GM12878 (cell line): ENCODE measurements at regions of chr14 and their contacts with region 1.

Region 1: GRCh38 chr14:62179367-62180018 is 417.3 kb downstream of the SNAPC1 start:
- DNase-seq: peak; percentile 9
- ATAC-seq: peak; percentile 83
- H3K4me3 ChIP-seq: no peak overlapping the region
- H3K27ac ChIP-seq: no peak overlapping the region
- H3K4me1 ChIP-seq: no peaks in the 10 kb centered on the region
- H3K27me3 ChIP-seq: no peaks in the 10 kb centered on the region
- CTCF ChIP-seq: peak; percentile 62 to 68 (median 65); a peak in 5 of 6 replicates
- EP300 ChIP-seq: no peak
- POLR2A ChIP-seq: no peak
- RAD21 ChIP-seq: peak; percentile 81

Region 2: GRCh38 chr14:63039800-63040380 is 860.4 kb after region 1 on chr14:
- CTCF ChIA-PET with region 1: interaction called, 5 read pairs
- POLR2A ChIA-PET with region 1: no interaction called
- RAD21 ChIA-PET with region 1: no interaction called
- SMC1A ChIA-PET with region 1: no interaction called
- in situ Hi-C with region 1: no loop called
- intact Hi-C with region 1: loop called (anchors 5 kb)
- DNase-seq: no peak
- ATAC-seq: peak; percentile 50; the same call in 2 of the 3 replicates
- H3K4me3 ChIP-seq: no peak overlapping the region
- H3K27ac ChIP-seq: no peak overlapping the region
- H3K4me1 ChIP-seq: no peaks in the 10 kb centered on the region
- H3K27me3 ChIP-seq: peaks cover 0 to 3% of the 10 kb centered on the region in 2 experiments; a peak in 1 of 4 replicates
- CTCF ChIP-seq: peak; percentile 8 to 30 (median 17); a peak in 2 of 6 replicates
- EP300 ChIP-seq: no peak
- POLR2A ChIP-seq: no peak
- RAD21 ChIP-seq: peak; percentile 43

Region 3: DNA sequence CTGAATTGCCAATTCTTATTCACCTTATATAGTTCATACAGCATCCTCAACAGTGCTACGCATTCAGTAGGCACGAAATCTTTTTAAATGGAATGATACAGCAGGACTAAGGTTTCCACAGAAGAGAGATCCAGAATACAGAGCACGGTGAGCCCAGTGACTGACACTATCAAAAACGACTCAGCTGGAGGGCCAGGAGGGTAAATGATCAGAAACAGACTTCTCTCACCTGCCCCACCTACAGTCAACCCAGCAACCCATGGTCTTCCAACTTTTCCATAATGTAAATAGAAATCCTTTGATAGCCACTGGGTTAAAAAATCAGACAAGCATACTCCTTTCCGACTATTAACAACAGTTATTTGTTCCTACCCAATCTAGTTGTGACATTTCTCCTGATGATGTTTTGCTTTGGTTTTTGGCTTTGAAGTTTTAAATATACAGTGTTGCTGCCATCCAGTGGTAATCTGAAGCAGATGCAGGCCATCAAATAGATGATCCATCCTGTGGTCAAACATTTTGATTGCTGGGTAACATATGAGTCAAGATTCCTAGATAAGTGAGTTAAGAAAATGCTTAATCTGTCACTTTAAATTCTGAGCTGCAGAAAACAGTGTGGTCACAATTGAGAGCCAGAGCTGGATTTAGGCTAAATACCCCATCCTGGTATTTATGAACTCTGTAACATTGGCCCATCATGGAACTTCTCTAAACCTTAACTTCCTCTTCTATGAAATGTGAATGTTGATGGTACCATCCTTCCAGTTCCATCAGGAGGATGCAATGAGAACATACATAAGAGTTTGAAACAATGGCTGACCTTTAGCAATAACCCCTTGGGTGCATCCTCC is 1097.2 kb after region 1 on chr14:
- CTCF ChIA-PET with region 1: interaction called, 17 read pairs
- POLR2A ChIA-PET with region 1: no interaction called
- RAD21 ChIA-PET with region 1: interaction called, 4 read pairs
- SMC1A ChIA-PET with region 1: no interaction called
- in situ Hi-C with region 1: no loop called
- intact Hi-C with region 1: loop called (anchors 1 kb)
- DNase-seq: no peak
- ATAC-seq: peak; percentile 78
- H3K4me3 ChIP-seq: no peak overlapping the region
- H3K27ac ChIP-seq: no peak overlapping the region
- H3K4me1 ChIP-seq: no peaks in the 10 kb centered on the region
- H3K27me3 ChIP-seq: peaks cover 0 to 3% of the 10 kb centered on the region in 2 experiments; a peak in 1 of 4 replicates
- CTCF ChIP-seq: peak; percentile 66 to 83 (median 74); a peak in 5 of 6 replicates
- EP300 ChIP-seq: no peak
- POLR2A ChIP-seq: no peak
- RAD21 ChIP-seq: peak; percentile 83